Motor neuron (in vitro differentiated cells): ENCODE measurements at regions of chr7 and their contacts with region 1.

Region 1: DNA sequence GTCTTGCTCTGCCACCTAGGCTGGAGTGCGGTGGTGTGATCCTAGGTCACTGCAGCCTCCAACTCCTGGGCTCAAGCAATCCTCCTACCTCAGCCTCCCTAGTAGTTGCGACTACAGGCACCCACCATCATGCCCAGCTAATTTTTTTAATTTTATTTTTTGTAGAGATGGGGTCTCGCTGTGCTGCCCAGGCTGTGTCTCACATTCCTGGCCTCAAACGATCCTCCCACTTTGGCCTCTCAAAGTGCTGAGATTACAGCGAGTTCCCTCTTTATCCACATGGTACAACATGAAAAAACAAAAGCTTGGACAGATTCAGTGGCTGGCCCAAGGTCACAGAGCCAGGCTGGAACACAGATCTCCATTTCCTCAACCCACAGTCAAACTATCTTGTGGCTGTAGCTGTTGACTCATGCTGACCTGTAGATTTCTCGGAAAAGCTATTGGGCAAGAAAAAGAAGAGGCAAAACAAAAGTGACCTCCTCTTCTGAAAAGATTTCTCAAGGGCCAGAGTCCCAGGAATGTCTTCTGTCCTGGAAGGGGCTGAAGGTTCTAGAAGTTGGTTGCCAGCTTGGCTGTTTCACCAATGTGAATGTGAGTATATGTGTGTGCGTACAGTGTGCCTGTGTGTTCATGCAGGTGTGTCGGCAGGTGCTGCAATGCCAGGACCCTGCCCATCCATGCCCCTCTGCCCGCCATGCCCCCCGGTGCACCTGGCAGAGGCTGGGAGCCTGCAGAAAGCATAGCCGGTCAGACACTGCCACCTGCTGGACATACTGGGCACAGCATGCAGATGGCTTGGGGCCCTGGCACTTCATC is 28.4 kb downstream of the TMEM130 start:
- ATAC-seq: peak in 6 of 8 experiments; percentile 8 to 83 (median 52)
- H3K4me3 ChIP-seq: no peak overlapping the region
- H3K27ac ChIP-seq: no peak overlapping the region
- H3K4me1 ChIP-seq: peaks cover 0 to 5% of the 10 kb centered on the region in 2 donors

Region 2: DNA sequence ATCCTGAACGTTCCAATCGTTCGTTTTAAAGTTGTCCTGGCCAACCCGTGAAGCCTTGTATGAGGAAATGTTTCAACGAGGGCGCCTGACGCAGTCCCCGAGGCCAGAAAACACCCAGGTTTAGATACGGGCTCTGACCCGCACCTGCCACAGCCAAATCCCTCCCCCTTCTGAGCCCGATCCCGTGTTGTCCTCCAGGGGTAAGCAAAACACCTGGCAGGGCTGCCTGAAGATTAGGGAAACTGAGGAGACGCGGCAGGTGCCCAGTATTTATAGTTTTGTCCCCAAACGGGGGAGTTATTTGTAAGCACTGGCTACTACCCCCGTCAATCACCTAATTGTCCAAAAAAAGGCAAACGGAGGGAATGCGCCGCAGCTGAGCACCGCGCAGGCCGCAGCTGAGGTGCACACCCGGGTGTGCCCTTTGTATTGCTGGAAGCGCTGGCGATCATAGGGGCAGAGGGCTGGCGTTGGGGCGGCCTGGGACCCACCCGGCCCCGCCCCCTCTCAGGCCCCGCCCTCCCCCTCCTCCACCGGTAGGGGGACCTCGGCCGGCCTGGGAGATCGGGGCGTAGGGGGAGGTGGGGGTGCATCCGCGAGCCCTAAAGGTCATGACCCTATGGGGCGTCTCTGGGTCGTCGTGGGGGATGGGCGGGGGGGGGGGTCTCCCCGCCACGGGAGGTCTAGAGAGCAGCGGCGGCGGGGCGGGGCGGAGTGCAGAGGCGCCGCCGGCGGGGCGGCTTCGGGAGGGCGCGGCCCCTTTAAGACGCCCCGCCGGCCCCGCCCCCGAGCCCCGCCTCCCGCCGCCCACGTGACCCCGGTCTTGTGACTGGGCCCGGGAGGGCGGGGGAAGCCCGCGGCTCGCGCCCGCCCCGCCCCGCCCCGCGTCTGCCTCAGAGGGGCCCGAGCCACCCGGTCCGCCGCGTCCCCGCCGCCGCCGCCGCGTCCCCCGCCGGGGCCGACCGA is 560.3 kb before region 1 on chr7 and contains the start of gene BRI3:
- in situ Hi-C with region 1: loop called in 1 of 9 experiments (anchors 25 kb)
- ATAC-seq: peak; percentile 37 to 83 (median 80)
- H3K4me3 ChIP-seq: peak within 1 kb of the TSS; percentile 86 to 100 (median 95)
- H3K27ac ChIP-seq: peak within 1 kb of the TSS; percentile 83 to 87
- H3K4me1 ChIP-seq: peaks cover 34 to 35% of the 10 kb centered on the region in 2 donors
- total RNA-seq, gene BRI3: 48.7 to 99.2 (median 70.5) TPM

Region 3: DNA sequence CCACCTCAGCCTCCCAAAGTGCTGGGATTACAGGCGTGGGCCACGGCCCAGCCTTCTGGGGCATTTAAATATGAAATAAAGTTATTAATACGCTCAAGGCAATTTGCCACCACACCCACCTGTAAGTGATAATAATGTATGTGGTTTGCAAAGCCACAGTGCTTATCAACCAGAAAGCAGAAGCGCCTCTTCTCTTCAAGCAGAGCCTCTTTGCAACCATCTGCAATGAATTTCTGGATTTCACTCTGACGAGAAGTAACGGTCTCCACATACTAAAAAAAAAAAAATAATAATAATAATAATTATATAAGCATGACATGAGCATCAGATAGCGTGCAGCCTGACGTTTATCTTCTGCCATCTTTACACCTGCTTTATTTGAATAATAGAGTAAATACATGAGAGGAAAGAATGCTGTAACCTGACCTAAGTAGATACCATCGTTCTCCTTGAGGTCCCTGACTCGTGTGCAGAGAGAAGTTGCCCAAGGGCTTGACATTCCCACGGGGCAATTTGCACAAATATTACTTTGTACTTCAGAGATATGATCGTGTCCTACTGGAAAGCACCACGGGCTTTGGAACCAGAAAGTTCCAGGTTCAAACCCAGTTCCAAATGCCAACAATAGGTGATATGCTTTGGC is 525.9 kb before region 1 on chr7:
- in situ Hi-C with region 1: loop called in 3 of 9 experiments (anchors 25 kb)
- ATAC-seq: no peak
- H3K4me3 ChIP-seq: no peak overlapping the region
- H3K27ac ChIP-seq: no peak overlapping the region
- H3K4me1 ChIP-seq: no peaks in the 10 kb centered on the region

Region 4: GRCh38 chr7:98420966-98421612 is 420.3 kb before region 1 on chr7:
- in situ Hi-C with region 1: loop called in 2 of 9 experiments (anchors 10 to 25 kb)
- ATAC-seq: peak; percentile 10 to 90 (median 62)
- H3K4me3 ChIP-seq: no peak overlapping the region
- H3K27ac ChIP-seq: no peak overlapping the region
- H3K4me1 ChIP-seq: no peaks in the 10 kb centered on the region

Region 5: DNA sequence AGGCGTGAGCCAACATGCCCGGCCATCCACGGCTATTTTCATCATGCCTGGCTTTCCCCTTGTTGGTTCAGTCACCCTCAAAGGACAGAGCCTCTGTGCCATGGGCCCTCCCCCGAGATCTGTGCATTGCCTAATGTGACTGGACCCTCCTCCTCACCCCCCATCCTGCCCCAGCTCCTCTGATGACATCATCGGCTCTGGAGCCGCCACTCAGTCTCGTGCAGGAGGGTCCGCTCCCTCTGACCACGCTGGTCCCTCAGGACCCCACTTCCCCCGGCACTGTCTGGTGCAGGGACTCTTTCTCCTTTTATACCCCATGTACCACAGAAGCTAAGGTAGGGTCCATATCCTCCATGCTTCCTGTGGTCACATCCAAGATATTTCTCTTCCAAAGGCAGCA is 407.3 kb before region 1 on chr7:
- in situ Hi-C with region 1: loop called (anchors 5 to 25 kb)
- ATAC-seq: no peak
- H3K4me3 ChIP-seq: no peak overlapping the region
- H3K27ac ChIP-seq: no peak overlapping the region
- H3K4me1 ChIP-seq: no peaks in the 10 kb centered on the region

Region 6: GRCh38 chr7:98439484-98439883 is 401.9 kb before region 1 on chr7:
- in situ Hi-C with region 1: loop called in 8 of 9 experiments (anchors 5 to 25 kb)
- ATAC-seq: no peak
- H3K4me3 ChIP-seq: no peak overlapping the region
- H3K27ac ChIP-seq: no peak overlapping the region
- H3K4me1 ChIP-seq: no peaks in the 10 kb centered on the region